Activated CD4-positive, alpha-beta memory T cell treated with anti-CD3 and anti-CD28 coated beads, Interleukin-2, amount 10 ng/mL, durations not matched to agents 7 days and 5 days (primary cell): ENCODE measurements at regions of chr3 and their contacts with region 1.

Region 1: GRCh38 chr3:49171119-49171774 is at the start of gene KLHDC8B:
- DNase-seq: peak; percentile 85
- H3K4me3 Mint-ChIP-seq: peak within 1 kb of the TSS; percentile 76
- H3K27ac Mint-ChIP-seq: no peak within 1 kb of the TSS
- H3K4me1 Mint-ChIP-seq: peaks cover 16% of the 10 kb centered on the region
- H3K27me3 Mint-ChIP-seq: peaks cover 2% of the 10 kb centered on the region
- total RNA-seq, gene KLHDC8B: 1.2 to 1.4 TPM

Region 2: GRCh38 chr3:49158108-49158709 is 13.0 kb before region 1 on chr3:
- CTCF ChIA-PET with region 1: interaction called, 10 read pairs
- POLR2A ChIA-PET with region 1: interaction called, 4 read pairs
- DNase-seq: peak; percentile 75
- H3K4me3 Mint-ChIP-seq: no peak overlapping the region
- H3K27ac Mint-ChIP-seq: no peak overlapping the region
- H3K4me1 Mint-ChIP-seq: peaks cover 13% of the 10 kb centered on the region
- H3K27me3 Mint-ChIP-seq: no peaks in the 10 kb centered on the region

Region 3: GRCh38 chr3:49181351-49181750 is 10.1 kb after region 1 on chr3:
- CTCF ChIA-PET with region 1: interaction called, 17 read pairs
- POLR2A ChIA-PET with region 1: no interaction called
- DNase-seq: no peak
- H3K4me3 Mint-ChIP-seq: no peak overlapping the region
- H3K27ac Mint-ChIP-seq: no peak overlapping the region
- H3K4me1 Mint-ChIP-seq: no peaks in the 10 kb centered on the region
- H3K27me3 Mint-ChIP-seq: peaks cover 14% of the 10 kb centered on the region

Region 4: DNA sequence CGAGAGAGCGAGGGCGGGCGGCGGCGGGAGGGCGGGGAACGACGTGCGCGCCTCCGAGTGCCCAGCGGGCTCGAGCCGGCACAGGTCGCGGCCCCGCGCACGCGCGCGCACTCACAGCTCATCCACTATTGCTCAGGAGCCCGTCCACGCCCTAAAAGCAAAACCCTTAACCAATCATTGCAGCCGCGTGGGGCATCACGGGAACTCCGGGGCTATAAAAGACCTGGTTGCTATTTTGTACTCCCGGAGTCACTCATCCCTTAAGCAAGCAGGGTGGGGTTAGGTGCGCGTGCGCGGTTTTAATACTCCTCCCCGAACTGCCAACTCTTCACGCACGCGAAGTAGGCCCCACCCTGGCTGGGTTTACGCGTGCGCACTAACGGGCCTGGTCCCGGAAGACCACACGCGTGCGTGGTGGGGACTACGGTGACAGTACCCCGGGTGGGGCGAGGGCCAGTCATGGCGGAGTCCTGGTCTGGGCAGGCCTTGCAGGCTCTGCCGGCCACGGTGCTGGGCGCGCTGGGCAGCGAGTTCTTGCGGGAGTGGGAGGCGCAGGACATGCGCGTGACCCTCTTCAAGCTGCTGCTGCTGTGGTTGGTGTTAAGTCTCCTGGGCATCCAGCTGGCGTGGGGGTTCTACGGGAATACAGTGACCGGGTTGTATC is 240.9 kb after region 1 on chr3 and contains the starts of genes RHOA and TCTA:
- CTCF ChIA-PET with region 1: no interaction called
- POLR2A ChIA-PET with region 1: no interaction called
- DNase-seq: peak; percentile 99
- H3K4me3 Mint-ChIP-seq: peak within 1 kb of the TSS; percentile 98
- H3K27ac Mint-ChIP-seq: peak within 1 kb of the TSS; percentile 99
- H3K4me1 Mint-ChIP-seq: peaks cover 68% of the 10 kb centered on the region
- H3K27me3 Mint-ChIP-seq: peaks cover 2% of the 10 kb centered on the region
- total RNA-seq, gene RHOA: 504 to 505 TPM
- total RNA-seq, gene TCTA: 19.7 to 22.4 TPM

Region 5: GRCh38 chr3:49454458-49454857 is 283.2 kb after region 1 on chr3:
- CTCF ChIA-PET with region 1: interaction called, 16 read pairs
- POLR2A ChIA-PET with region 1: no interaction called
- DNase-seq: no peak
- H3K4me3 Mint-ChIP-seq: no peak overlapping the region
- H3K27ac Mint-ChIP-seq: no peak overlapping the region
- H3K4me1 Mint-ChIP-seq: no peaks in the 10 kb centered on the region
- H3K27me3 Mint-ChIP-seq: no peaks in the 10 kb centered on the region